ENCODE measurements at regions of chr9 and their contacts with region 1.

Region 1: DNA sequence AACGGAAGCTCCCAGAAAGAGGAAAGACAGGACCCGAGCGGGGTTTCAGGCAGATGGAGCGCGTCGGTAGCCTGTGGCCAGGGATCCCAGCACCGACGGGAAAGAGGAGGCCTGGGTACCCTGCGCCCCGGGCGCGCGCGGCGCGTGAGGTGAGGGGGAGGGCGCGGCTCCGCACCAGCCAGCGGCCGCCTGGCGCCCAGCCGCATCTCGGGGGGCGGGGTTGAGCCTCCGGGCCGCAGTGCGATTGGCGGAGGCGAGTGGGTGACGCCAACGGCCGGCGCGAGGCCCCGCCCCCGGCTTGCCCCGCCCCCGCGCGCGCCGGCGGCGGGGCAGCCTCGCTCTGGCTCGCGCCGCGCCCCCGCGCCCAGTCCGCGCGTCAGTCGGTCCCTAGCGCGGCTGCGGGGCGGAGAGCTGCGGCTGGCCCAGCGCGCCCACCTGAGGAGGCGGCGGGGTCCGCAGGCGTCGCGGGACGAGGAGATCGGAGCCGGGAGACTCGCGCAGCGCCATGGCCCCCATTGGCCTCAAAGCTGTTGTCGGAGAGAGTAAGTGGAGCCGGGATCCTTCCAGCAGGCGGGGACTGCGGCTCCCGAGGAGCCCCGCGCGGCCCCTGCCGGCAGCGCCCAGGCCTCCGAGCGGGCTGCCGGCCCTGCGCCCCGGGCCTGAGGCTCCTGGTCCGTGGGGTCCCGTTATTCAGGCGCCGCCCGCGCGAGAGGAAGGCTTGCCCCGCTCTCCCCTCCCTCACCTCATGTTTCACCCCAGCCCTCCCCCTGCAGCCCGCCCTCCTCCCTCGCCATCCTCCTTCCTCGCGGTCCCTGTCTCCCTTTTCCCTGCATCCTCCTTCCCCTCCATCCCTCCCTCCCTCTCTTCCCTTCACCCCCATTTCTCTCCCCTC is at the start of gene STXBP1:
- DNase-seq: peak; percentile 78 to 84
- ATAC-seq: peak; percentile 81 to 87
- H3K4me3 ChIP-seq: peak within 1 kb of the TSS; percentile 62 to 82 (median 73)
- H3K27ac ChIP-seq: peak within 1 kb of the TSS; percentile 81 to 89 (median 86)
- H3K4me1 ChIP-seq: peaks cover 30 to 33% of the 10 kb centered on the region in 2 donors
- H3K27me3 ChIP-seq: no peaks in the 10 kb centered on the region
- CTCF ChIP-seq: peak in 3 of 5 experiments; percentile 27 to 32 (median 31)
- POLR2A ChIP-seq: peak; percentile 92
- total RNA-seq, gene STXBP1: 3.4 to 36.8 (median 9.2) TPM

Region 2: GRCh38 chr9:127684576-127684975 is 72.4 kb after region 1 on chr9:
- in situ Hi-C with region 1: no loop called
- intact Hi-C with region 1: loop called (anchors 5 kb)
- DNase-seq: no peak
- ATAC-seq: no peak
- H3K4me3 ChIP-seq: no peak overlapping the region
- H3K27ac ChIP-seq: no peak overlapping the region
- H3K4me1 ChIP-seq: peaks cover 18 to 26% of the 10 kb centered on the region in 2 donors
- H3K27me3 ChIP-seq: no peaks in the 10 kb centered on the region
- CTCF ChIP-seq: no peak
- POLR2A ChIP-seq: no peak

Region 3: GRCh38 chr9:127698985-127699670 is 87.0 kb after region 1 on chr9:
- in situ Hi-C with region 1: no loop called
- intact Hi-C with region 1: loop called (anchors 1 kb)
- DNase-seq: peak; percentile 99
- ATAC-seq: peak; percentile 97 to 98
- H3K4me3 ChIP-seq: peak overlapping the region; percentile 36 to 49 (median 40)
- H3K27ac ChIP-seq: peak overlapping the region; percentile 85 to 96 (median 91)
- H3K4me1 ChIP-seq: peaks cover 13 to 20% of the 10 kb centered on the region in 2 donors
- H3K27me3 ChIP-seq: no peaks in the 10 kb centered on the region
- CTCF ChIP-seq: peak; percentile 43 to 50 (median 47)
- POLR2A ChIP-seq: peak; percentile 58 to 78

Region 4: GRCh38 chr9:127715394-127716337 is 103.5 kb after region 1 on chr9 and contains the starts of genes PTRH1 and TTC16:
- in situ Hi-C with region 1: no loop called
- intact Hi-C with region 1: loop called (anchors 5 kb)
- DNase-seq: peak; percentile 95 to 96
- ATAC-seq: peak; percentile 94 to 96
- H3K4me3 ChIP-seq: peak within 1 kb of the TSS; percentile 74 to 85 (median 78)
- H3K27ac ChIP-seq: peak within 1 kb of the TSS; percentile 84 to 86 (median 84)
- H3K4me1 ChIP-seq: peaks cover 12 to 14% of the 10 kb centered on the region in 2 donors
- H3K27me3 ChIP-seq: no peaks in the 10 kb centered on the region
- CTCF ChIP-seq: no peak
- POLR2A ChIP-seq: peak; percentile 71 to 78
- total RNA-seq, gene PTRH1: 16.9 to 38.6 (median 26.3) TPM
- total RNA-seq, gene TTC16: not detected

Region 5: DNA sequence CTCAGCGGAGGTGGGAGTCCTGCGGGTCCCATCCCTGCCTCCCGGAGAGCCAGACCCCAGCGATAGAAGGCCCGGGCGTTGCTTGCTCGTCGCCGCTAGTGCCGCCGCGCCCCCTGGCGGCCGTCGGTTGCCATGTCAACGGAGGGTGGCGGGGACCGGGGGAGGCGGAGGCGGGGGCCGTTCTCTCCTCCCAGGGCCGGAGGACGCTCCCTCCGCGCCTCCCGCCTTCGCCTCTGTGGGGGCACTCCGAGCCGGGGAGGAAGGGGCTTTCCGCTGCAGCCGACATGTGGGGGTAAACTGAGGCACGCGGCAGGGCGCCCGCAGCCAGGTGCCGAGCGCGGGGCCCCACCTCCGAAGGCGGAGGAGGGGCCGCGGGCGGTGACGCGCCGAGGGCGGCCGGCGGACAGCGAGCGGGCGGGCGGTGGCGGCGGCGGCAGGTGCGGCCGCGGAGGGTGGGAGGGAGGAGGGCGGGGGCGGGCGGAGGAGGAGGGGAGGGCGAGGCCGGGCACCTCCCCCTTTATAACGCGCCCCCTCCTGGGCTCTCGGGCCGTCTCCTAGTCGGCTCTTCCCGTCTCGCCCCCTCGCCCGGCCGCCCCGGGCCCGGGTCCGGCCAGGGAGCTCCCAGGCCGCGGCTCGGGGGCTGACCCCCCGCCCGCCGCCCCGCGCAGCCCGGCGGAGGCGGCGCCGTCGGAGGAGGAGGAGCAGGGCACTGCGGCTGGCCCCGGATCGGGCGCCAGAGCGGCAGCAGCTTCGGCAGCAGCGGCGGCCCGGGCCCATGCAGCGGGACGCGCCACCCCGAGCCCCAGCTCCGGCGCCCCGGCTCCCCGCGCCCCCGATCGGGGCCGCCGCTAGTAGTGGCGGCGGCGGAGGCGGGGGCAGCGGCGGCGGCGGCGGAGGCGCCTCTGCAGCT is 173.1 kb after region 1 on chr9:
- in situ Hi-C with region 1: no loop called
- intact Hi-C with region 1: loop called (anchors 5 kb)
- DNase-seq: peak; percentile 73 to 84
- ATAC-seq: peak; percentile 80
- H3K4me3 ChIP-seq: peak overlapping the region; percentile 59 to 100 (median 92)
- H3K27ac ChIP-seq: peak overlapping the region; percentile 89 to 98 (median 96)
- H3K4me1 ChIP-seq: peaks cover 7 to 12% of the 10 kb centered on the region in 2 donors
- H3K27me3 ChIP-seq: no peaks in the 10 kb centered on the region
- CTCF ChIP-seq: peak; percentile 79 to 99 (median 99)
- POLR2A ChIP-seq: no peak

Region 6: DNA sequence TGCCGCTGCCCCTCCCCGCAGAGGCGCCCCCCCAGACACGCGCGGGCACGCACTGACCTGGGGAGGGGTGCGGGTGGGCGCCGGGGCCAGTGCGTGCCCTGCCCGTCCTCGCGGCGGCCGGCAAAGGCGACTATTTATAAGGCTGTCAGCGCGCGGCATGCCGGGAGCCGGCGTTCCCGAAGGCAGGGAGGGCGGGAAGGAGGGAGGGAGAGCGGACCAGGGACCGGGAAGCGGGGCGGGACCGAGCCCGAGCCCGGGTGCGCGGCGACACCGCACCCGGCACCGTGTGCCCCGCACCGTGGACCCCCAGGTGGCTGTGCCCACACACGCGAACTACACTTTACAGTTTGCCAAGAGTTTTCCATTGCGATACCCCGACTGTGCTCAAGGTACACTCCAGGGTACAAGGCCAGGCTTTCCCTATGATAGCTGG is 265.4 kb after region 1 on chr9 and contains the start of gene AK1:
- in situ Hi-C with region 1: no loop called
- intact Hi-C with region 1: loop called (anchors 5 kb)
- DNase-seq: peak; percentile 75 to 83
- ATAC-seq: peak; percentile 68 to 70
- H3K4me3 ChIP-seq: peak within 1 kb of the TSS; percentile 60 to 74 (median 68)
- H3K27ac ChIP-seq: peak within 1 kb of the TSS; percentile 86 to 96 (median 91)
- H3K4me1 ChIP-seq: peaks cover 47 to 48% of the 10 kb centered on the region in 2 donors
- H3K27me3 ChIP-seq: no peaks in the 10 kb centered on the region
- CTCF ChIP-seq: no peak
- POLR2A ChIP-seq: peak; percentile 74 to 90
- total RNA-seq, gene AK1: 240 to 489 (median 359) TPM

Measured in gastrocnemius medialis (tissue), 4 donors.